ENCODE measurements at regions of chr1 and their contacts with region 1.

Region 1: GRCh38 chr1:64242895-64243756 is 39.7 kb downstream of the UBE2U start:
- DNase-seq: no peak
- H3K4me3 ChIP-seq: no peak overlapping the region
- H3K27ac ChIP-seq: no peak overlapping the region
- H3K4me1 ChIP-seq: no peaks in the 10 kb centered on the region
- H3K27me3 ChIP-seq: no peaks in the 10 kb centered on the region
- CTCF ChIP-seq: peak; percentile 30 to 50 (median 34)
- POLR2A ChIP-seq: no peak

Region 2: DNA sequence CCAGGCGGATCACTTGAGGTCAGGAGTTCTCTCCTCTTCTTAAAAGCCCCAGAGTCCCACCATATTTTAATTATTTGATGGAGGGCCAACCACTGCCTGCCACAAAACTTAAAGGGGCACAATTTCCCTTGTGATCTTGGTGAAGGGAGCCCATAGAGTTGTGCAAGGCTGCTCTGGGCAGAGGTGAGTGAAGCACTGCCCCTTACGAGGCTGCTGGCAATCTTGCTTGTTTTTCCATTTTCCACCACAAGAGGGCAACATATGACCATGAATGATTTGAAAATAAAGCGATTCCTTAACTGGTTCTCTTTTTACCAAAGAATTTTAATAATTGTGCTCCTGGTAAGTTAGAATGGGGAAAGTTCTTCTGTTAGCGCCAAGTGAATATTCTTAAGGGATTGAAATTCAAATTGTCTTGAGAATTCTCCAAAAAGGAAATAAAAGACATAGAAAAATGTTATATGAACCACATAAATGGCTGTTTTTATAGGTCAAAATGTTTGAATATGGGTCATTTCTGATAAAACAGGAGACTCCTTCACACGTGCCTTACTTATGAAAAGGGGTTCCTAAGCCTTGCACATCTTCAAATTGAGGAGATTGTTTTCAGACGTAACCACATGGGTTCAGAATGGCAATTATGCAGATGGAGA is 627.2 kb before region 1 on chr1:
- intact Hi-C with region 1: loop called (anchors 5 kb)
- DNase-seq: no peak
- H3K4me3 ChIP-seq: no peak overlapping the region
- H3K27ac ChIP-seq: no peak overlapping the region
- H3K4me1 ChIP-seq: no peaks in the 10 kb centered on the region
- H3K27me3 ChIP-seq: no peaks in the 10 kb centered on the region
- CTCF ChIP-seq: peak; percentile 77 to 90 (median 79)
- POLR2A ChIP-seq: no peak

Region 3: DNA sequence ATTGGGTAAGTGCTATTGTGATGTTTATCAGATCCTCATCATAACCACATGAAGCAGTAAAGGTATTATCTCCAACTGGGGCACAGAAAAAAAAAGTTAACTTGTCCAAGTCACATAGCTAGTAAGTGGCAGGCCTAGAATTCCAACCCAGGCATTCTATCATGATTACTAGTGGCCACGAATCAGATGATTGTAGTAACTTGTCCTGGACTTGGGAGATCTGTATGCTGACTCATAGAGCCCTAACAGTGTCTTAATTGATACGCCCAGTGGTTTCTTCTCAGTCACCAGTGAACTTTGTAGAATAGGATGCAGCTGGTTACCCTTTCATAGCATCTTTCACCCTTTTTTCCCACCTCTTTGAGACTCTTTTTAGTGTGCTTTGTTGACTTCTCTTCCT is 130.8 kb before region 1 on chr1:
- intact Hi-C with region 1: no loop called
- DNase-seq: no peak
- H3K4me3 ChIP-seq: no peak overlapping the region
- H3K27ac ChIP-seq: no peak overlapping the region
- H3K4me1 ChIP-seq: no peaks in the 10 kb centered on the region
- H3K27me3 ChIP-seq: no peaks in the 10 kb centered on the region
- CTCF ChIP-seq: no peak
- POLR2A ChIP-seq: no peak